Common myeloid progenitor, CD34-positive (primary cell): ENCODE measurements at regions of chrX and their contacts with region 1.

Region 1: DNA sequence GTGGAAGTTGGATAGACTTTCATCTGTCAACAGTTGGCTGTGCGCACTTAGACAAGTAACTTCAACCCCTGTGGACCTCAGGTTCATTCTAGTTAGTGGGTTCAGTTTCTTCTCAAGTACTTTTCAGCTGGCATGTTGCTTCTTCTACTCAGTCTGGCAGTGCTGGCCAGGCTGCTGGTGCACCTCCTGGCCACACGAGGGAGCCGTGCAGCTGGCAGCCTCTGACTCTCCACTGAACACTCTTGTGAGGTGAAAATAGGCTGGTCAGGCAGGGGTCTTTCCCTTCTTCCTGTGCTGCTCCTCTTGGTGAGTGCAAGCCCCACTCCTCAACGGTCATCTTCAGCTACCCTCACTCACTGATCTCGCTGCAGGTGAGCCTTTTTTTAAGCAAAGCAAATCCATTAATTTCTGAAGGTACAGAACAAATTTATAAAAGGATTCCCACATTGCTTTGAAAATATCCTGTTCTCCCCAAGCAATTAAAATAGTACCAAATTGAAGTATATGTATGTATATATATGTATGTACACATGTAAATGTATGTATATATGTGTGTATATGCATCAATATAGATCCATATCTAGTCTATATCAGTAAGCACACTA is 30.6 kb downstream of the LONRF3 start:
- DNase-seq: peak; percentile 14 to 52 (median 44)
- H3K4me3 ChIP-seq: no peak overlapping the region
- H3K27ac ChIP-seq: no peak overlapping the region
- H3K4me1 ChIP-seq: no peaks in the 10 kb centered on the region
- H3K27me3 ChIP-seq: no peaks in the 10 kb centered on the region

Region 2: GRCh38 chrX:118847676-118848075 is 157.3 kb before region 1 on chrX:
- CTCF ChIA-PET with region 1: interaction called, 12 read pairs
- POLR2A ChIA-PET with region 1: no interaction called
- DNase-seq: peak; percentile 26 to 62 (median 49)
- H3K4me3 ChIP-seq: no peak overlapping the region
- H3K27ac ChIP-seq: no peak overlapping the region
- H3K4me1 ChIP-seq: no peaks in the 10 kb centered on the region
- H3K27me3 ChIP-seq: no peaks in the 10 kb centered on the region

Region 3: GRCh38 chrX:119015407-119016237 is 10.6 kb after region 1 on chrX:
- CTCF ChIA-PET with region 1: interaction called, 11 read pairs
- POLR2A ChIA-PET with region 1: no interaction called
- DNase-seq: peak; percentile 76 to 90 (median 85)
- H3K4me3 ChIP-seq: no peak overlapping the region
- H3K27ac ChIP-seq: peak overlapping the region in 1 of 2 experiments; percentile 68
- H3K4me1 ChIP-seq: peaks cover 0 to 11% (median 3%) of the 10 kb centered on the region in 4 experiments
- H3K27me3 ChIP-seq: no peaks in the 10 kb centered on the region

Region 4: GRCh38 chrX:119168104-119168503 is 163.1 kb after region 1 on chrX:
- CTCF ChIA-PET with region 1: no interaction called
- POLR2A ChIA-PET with region 1: no interaction called
- DNase-seq: no peak
- H3K4me3 ChIP-seq: no peak overlapping the region
- H3K27ac ChIP-seq: no peak overlapping the region
- H3K4me1 ChIP-seq: no peaks in the 10 kb centered on the region
- H3K27me3 ChIP-seq: peaks cover 0 to 4% (median 0%) of the 10 kb centered on the region in 5 experiments

Region 5: GRCh38 chrX:119391279-119391678 is 386.3 kb after region 1 on chrX:
- CTCF ChIA-PET with region 1: no interaction called
- POLR2A ChIA-PET with region 1: no interaction called
- DNase-seq: peak in 2 of 3 donors; percentile 41 to 50
- H3K4me3 ChIP-seq: no peak overlapping the region
- H3K27ac ChIP-seq: no peak overlapping the region
- H3K4me1 ChIP-seq: no peaks in the 10 kb centered on the region
- H3K27me3 ChIP-seq: no peaks in the 10 kb centered on the region